CD8-positive, alpha-beta T cell (primary cell): ENCODE measurements at regions of chr17 and their contacts with region 1.

Region 1: GRCh38 chr17:3845621-3846441 is at the start of gene NCBP3:
- DNase-seq: peak; percentile 80 to 95 (median 91)
- ATAC-seq: peak; percentile 94
- H3K4me3 ChIP-seq: peak within 1 kb of the TSS; percentile 84 to 99
- H3K4me3 Mint-ChIP-seq: peak within 1 kb of the TSS; percentile 93
- H3K27ac ChIP-seq: peak within 1 kb of the TSS; percentile 77 to 87
- H3K27ac Mint-ChIP-seq: peak within 1 kb of the TSS; percentile 89
- H3K4me1 ChIP-seq: peaks cover 14% of the 10 kb centered on the region
- H3K4me1 Mint-ChIP-seq: peaks cover 29% of the 10 kb centered on the region
- H3K27me3 ChIP-seq: no peaks in the 10 kb centered on the region
- H3K27me3 Mint-ChIP-seq: peaks cover 2% of the 10 kb centered on the region
- CTCF ChIP-seq: peak; percentile 88
- total RNA-seq, gene NCBP3: 28.4 to 35.3 TPM

Region 2: GRCh38 chr17:3615160-3615870 is 230.5 kb before region 1 on chr17:
- CTCF ChIA-PET with region 1: no interaction called
- POLR2A ChIA-PET with region 1: no interaction called
- intact Hi-C with region 1: no loop called
- DNase-seq: no peak
- ATAC-seq: no peak
- H3K4me3 ChIP-seq: no peak overlapping the region
- H3K4me3 Mint-ChIP-seq: no peak overlapping the region
- H3K27ac ChIP-seq: no peak overlapping the region
- H3K27ac Mint-ChIP-seq: no peak overlapping the region
- H3K4me1 ChIP-seq: no peaks in the 10 kb centered on the region
- H3K4me1 Mint-ChIP-seq: no peaks in the 10 kb centered on the region
- H3K27me3 ChIP-seq: no peaks in the 10 kb centered on the region
- H3K27me3 Mint-ChIP-seq: no peaks in the 10 kb centered on the region
- CTCF ChIP-seq: no peak

Region 3: GRCh38 chr17:3668279-3669085 is 177.3 kb before region 1 on chr17 and contains the starts of genes EMC6 and TAX1BP3:
- CTCF ChIA-PET with region 1: no interaction called
- POLR2A ChIA-PET with region 1: interaction called, 4 read pairs
- intact Hi-C with region 1: loop called (anchors 5 kb)
- DNase-seq: peak; percentile 97 to 100 (median 98)
- ATAC-seq: peak; percentile 92
- H3K4me3 ChIP-seq: peak within 1 kb of the TSS; percentile 73 to 100
- H3K4me3 Mint-ChIP-seq: peak within 1 kb of the TSS; percentile 90
- H3K27ac ChIP-seq: peak within 1 kb of the TSS; percentile 58 to 86
- H3K27ac Mint-ChIP-seq: peak within 1 kb of the TSS; percentile 81
- H3K4me1 ChIP-seq: peaks cover 21% of the 10 kb centered on the region
- H3K4me1 Mint-ChIP-seq: peaks cover 22% of the 10 kb centered on the region
- H3K27me3 ChIP-seq: no peaks in the 10 kb centered on the region
- H3K27me3 Mint-ChIP-seq: no peaks in the 10 kb centered on the region
- CTCF ChIP-seq: no peak
- total RNA-seq, gene EMC6: 39.4 to 41.6 TPM
- total RNA-seq, gene TAX1BP3: 5.5 to 5.8 TPM

Region 4: DNA sequence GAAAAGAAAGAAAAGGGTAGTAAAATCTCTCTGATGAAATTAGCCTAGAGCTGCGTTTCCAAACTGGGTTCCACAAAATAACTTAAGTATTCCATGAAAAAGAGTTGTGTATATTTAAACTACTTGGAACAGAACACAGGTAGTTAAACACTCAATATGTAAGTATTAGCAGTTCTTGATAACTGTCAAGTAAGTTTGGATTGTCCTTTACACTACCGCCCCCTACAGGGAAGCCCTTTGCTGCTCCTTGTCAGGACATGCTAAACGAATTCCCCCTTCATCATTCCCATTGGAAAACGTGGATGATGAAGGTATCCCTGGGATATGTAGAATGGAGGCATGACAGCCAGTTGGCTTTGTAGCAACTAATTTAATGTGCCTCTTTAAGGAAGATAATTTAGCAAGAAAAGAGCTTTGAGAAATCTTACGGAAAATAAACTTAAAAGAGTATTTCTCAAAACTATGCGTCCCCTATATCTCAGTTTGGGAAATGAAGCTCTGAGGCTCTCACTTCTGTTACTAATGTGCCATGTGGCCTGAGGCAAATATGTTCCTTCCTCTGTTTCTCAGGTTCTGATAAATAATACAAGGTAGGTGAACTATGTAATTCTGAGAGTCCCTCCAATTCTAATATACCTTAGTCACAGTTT is 18.6 kb before region 1 on chr17:
- CTCF ChIA-PET with region 1: interaction called, 60 read pairs
- POLR2A ChIA-PET with region 1: no interaction called
- intact Hi-C with region 1: no loop called
- DNase-seq: peak; percentile 50 to 85 (median 79)
- ATAC-seq: peak; percentile 80
- H3K4me3 ChIP-seq: no peak overlapping the region
- H3K4me3 Mint-ChIP-seq: no peak overlapping the region
- H3K27ac ChIP-seq: no peak overlapping the region
- H3K27ac Mint-ChIP-seq: no peak overlapping the region
- H3K4me1 ChIP-seq: no peaks in the 10 kb centered on the region
- H3K4me1 Mint-ChIP-seq: peaks cover 2% of the 10 kb centered on the region
- H3K27me3 ChIP-seq: no peaks in the 10 kb centered on the region
- H3K27me3 Mint-ChIP-seq: no peaks in the 10 kb centered on the region
- CTCF ChIP-seq: peak; percentile 96

Region 5: DNA sequence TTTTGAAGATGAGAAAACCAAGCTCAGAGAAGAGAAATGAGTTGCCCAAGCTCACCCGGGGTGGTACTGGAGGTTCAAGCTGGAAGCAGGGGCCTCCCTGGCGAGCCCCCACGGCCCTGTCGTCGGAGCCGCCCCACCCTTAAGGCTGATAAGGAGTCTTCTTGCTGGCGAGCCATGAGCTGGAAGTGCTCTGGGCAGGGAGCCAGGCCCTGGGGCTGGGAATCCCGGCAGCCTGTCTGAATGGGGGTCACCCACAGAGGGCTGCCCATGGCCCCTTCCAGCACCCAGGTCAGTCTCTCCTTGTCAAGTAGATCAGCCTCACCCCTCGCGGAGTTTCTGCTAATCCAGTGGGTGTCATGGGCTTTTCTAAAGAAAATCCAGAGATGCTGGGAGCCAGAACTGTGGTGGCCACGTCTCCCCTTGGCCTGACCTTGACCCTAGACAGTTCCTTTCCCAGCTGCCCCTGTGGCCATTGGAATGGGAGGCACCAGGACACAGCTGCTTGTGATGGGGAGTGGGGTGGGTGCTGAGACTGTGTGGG is 71.6 kb after region 1 on chr17:
- CTCF ChIA-PET with region 1: no interaction called
- POLR2A ChIA-PET with region 1: no interaction called
- intact Hi-C with region 1: no loop called
- DNase-seq: no peak
- ATAC-seq: no peak
- H3K4me3 ChIP-seq: no peak overlapping the region
- H3K4me3 Mint-ChIP-seq: no peak overlapping the region
- H3K27ac ChIP-seq: no peak overlapping the region
- H3K27ac Mint-ChIP-seq: no peak overlapping the region
- H3K4me1 ChIP-seq: peaks cover 43% of the 10 kb centered on the region
- H3K4me1 Mint-ChIP-seq: peaks cover 43% of the 10 kb centered on the region
- H3K27me3 ChIP-seq: no peaks in the 10 kb centered on the region
- H3K27me3 Mint-ChIP-seq: no peaks in the 10 kb centered on the region
- CTCF ChIP-seq: no peak

Region 6: DNA sequence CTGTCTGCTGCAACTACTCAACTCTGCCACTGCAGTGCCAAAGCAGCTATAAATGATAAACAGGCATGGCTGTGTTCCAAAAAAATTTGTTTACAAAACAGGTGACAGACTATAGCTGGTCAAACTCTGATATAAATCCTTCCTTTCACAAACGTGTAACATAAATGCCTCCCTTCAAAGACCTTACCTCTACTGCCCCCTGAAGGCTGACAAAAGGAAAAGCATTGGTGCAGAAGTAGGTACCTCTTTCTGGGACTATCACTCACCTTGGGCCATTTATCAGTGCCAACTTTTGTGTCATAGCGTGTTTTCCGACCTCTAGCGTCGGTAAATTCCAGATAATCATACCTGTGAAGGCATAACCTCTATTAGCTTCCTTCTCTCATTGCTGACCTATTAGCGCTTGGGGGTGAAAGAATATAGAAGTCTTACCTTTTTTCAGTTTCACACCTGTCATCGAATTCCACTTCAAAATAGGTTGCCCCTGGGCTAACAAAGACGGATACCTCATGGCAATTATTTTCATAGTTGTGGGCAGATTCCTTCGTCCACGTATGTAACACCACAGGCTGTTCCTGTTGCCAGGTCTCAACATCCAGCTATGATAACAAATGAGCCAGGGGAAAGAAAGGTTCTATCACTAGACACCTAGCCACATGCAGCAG is 229.1 kb after region 1 on chr17:
- CTCF ChIA-PET with region 1: interaction called, 12 read pairs
- POLR2A ChIA-PET with region 1: no interaction called
- intact Hi-C with region 1: loop called in 1 of 2 experiments (anchors 2 kb)
- DNase-seq: peak in 2 of 9 experiments; percentile 66 to 75
- ATAC-seq: peak; percentile 78
- H3K4me3 ChIP-seq: no peak overlapping the region
- H3K4me3 Mint-ChIP-seq: no peak overlapping the region
- H3K27ac ChIP-seq: no peak overlapping the region
- H3K27ac Mint-ChIP-seq: no peak overlapping the region
- H3K4me1 ChIP-seq: no peaks in the 10 kb centered on the region
- H3K4me1 Mint-ChIP-seq: no peaks in the 10 kb centered on the region
- H3K27me3 ChIP-seq: no peaks in the 10 kb centered on the region
- H3K27me3 Mint-ChIP-seq: no peaks in the 10 kb centered on the region
- CTCF ChIP-seq: peak; percentile 71

Region 7: DNA sequence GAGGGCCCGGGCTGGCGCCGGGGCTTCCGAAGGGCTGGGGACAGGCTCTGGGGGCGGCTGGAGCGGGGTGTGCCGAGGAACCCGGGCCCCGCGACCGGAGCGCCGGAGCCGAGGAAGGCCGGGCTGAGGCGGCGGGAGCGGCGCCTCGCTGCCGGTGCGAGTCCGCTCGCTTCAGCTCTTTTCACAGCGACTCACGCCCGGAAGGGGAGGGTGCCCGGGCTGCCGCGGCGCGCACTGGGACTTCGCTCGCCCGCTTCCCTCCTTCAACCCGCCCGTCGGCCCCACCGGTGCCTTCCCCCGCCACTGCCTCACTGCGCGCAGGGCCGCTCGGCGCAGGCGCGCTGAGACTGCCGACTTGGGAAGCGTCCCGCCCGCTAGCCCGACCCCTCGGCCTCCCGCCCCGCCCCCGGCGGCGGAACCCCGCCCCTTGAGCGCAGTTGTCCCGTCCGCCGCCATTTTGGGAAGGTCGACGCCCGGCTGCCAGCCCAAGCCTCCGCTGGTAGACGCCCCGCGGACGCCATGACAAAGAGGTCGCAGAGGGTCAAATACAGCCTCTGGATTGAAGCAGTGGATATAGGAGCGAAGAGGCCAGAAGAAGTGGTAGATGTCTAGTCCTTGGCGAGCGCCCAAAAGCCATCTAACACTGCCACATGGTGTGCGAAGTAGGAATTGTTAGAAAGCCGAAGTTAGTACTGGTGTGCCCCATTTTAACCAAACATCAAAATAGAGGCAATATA is 520.7 kb after region 1 on chr17 and contains the start of gene UBE2G1:
- CTCF ChIA-PET with region 1: no interaction called
- POLR2A ChIA-PET with region 1: no interaction called
- intact Hi-C with region 1: loop called in 1 of 2 experiments (anchors 5 kb)
- DNase-seq: peak; percentile 97 to 100 (median 99)
- ATAC-seq: peak; percentile 86
- H3K4me3 ChIP-seq: peak within 1 kb of the TSS; percentile 53 to 64
- H3K4me3 Mint-ChIP-seq: peak within 1 kb of the TSS; percentile 82
- H3K27ac ChIP-seq: peak within 1 kb of the TSS; percentile 63 to 70
- H3K27ac Mint-ChIP-seq: peak within 1 kb of the TSS; percentile 92
- H3K4me1 ChIP-seq: peaks cover 28% of the 10 kb centered on the region
- H3K4me1 Mint-ChIP-seq: peaks cover 24% of the 10 kb centered on the region
- H3K27me3 ChIP-seq: no peaks in the 10 kb centered on the region
- H3K27me3 Mint-ChIP-seq: no peaks in the 10 kb centered on the region
- CTCF ChIP-seq: no peak
- total RNA-seq, gene UBE2G1: 65.8 to 68.0 TPM